ENCODE measurements at regions of chr7 and their contacts with region 1.

Region 1: GRCh38 chr7:122155566-122155965 is 11.5 kb upstream of the AASS start:
- DNase-seq: no peak
- H3K4me3 ChIP-seq: no peak overlapping the region
- H3K27me3 ChIP-seq: no peaks in the 10 kb centered on the region
- CTCF ChIP-seq: no peak

Region 2: DNA sequence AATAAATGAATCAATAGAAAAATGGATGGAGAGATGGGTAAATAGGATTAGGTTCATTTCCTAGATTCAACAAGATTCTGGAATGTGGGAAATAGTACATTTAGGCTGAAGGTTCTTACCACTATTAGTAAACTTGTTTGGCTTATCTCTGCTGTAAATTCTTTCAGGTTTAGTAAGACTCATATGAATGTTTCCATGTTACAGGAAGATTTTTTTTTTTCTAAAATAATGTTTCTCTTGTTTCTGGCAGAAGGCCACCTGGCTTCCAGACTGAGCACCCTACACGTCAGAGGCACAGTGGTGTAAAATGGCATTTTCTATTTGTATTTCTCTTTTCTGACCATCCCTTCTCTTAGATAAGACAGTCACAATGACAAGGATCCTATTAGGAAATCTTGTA is 11.1 kb after region 1 on chr7:
- CTCF ChIA-PET with region 1: interaction called, 10 read pairs
- POLR2A ChIA-PET with region 1: no interaction called
- DNase-seq: peak; percentile 40
- H3K4me3 ChIP-seq: no peak overlapping the region
- H3K27me3 ChIP-seq: 0 out of 2 replicates have a peak, but pooled peaks cover 2% of the 10 kb centered on the region
- CTCF ChIP-seq: no peak